GM12878 (cell line): ENCODE measurements at regions of chr21 and their contacts with region 1.

Region 1: DNA sequence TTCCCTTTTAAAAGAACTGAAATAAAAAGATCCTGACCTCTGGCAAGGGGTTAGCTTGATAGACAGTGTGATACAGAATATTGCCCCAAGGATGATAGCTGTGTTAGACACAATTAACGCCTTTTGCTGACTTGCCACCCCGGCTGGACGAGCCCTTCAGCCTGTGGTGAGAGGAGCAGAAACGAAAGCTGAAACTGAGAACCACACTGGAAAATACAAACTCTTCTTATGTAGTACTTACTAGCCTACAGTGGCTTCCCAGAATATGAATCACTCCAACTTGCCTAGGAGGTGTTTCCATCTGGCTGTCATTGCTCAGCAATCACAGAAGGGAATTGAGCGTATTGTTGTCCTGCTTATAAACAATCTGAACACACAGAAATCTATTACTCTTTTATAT is 22.9 kb downstream of the SAMSN1 start:
- DNase-seq: no peak
- ATAC-seq: peak; percentile 87
- H3K4me3 ChIP-seq: peak overlapping the region; percentile 29; the same call in 1 of the 2 replicates
- H3K27ac ChIP-seq: peak overlapping the region; percentile 50
- H3K4me1 ChIP-seq: peaks cover 32% of the 10 kb centered on the region
- H3K27me3 ChIP-seq: no peaks in the 10 kb centered on the region
- CTCF ChIP-seq: no peak
- EP300 ChIP-seq: no peak; a peak in 1 of 4 replicates
- POLR2A ChIP-seq: no peak
- RAD21 ChIP-seq: no peak

Region 2: GRCh38 chr21:14545906-14546480 is 22.8 kb after region 1 on chr21 and contains the start of gene SAMSN1:
- CTCF ChIA-PET with region 1: interaction called, 7 read pairs
- POLR2A ChIA-PET with region 1: interaction called, 5 read pairs
- RAD21 ChIA-PET with region 1: interaction called, 28 read pairs
- SMC1A ChIA-PET with region 1: interaction called, 120 read pairs
- in situ Hi-C with region 1: no loop called
- intact Hi-C with region 1: no loop called
- DNase-seq: peak; percentile 78
- ATAC-seq: peak; percentile 86
- H3K4me3 ChIP-seq: peak within 1 kb of the TSS; percentile 76
- H3K27ac ChIP-seq: peak within 1 kb of the TSS; percentile 87
- H3K4me1 ChIP-seq: peaks cover 12% of the 10 kb centered on the region; the same call in 1 of the 2 replicates
- H3K27me3 ChIP-seq: no peaks in the 10 kb centered on the region
- CTCF ChIP-seq: no peak
- EP300 ChIP-seq: peak in 1 of 2 experiments; percentile 66; a peak in 1 of 4 replicates
- POLR2A ChIP-seq: peak; percentile 83
- RAD21 ChIP-seq: 0 out of 2 replicates have a peak, but pooled peaks have one; percentile 22
- polyA plus RNA-seq, gene SAMSN1: 90.4 to 102 TPM

Region 3: GRCh38 chr21:14554948-14555347 is 31.7 kb after region 1 on chr21:
- CTCF ChIA-PET with region 1: no interaction called
- POLR2A ChIA-PET with region 1: no interaction called
- RAD21 ChIA-PET with region 1: interaction called, 4 read pairs
- SMC1A ChIA-PET with region 1: interaction called, 11 read pairs
- in situ Hi-C with region 1: no loop called
- intact Hi-C with region 1: no loop called
- DNase-seq: no peak
- ATAC-seq: peak; percentile 28; the same call in 1 of the 3 replicates
- H3K4me3 ChIP-seq: no peak overlapping the region
- H3K27ac ChIP-seq: no peak overlapping the region
- H3K4me1 ChIP-seq: peaks cover 19% of the 10 kb centered on the region
- H3K27me3 ChIP-seq: no peaks in the 10 kb centered on the region
- CTCF ChIP-seq: no peak
- EP300 ChIP-seq: no peak
- POLR2A ChIP-seq: no peak
- RAD21 ChIP-seq: no peak

Region 4: DNA sequence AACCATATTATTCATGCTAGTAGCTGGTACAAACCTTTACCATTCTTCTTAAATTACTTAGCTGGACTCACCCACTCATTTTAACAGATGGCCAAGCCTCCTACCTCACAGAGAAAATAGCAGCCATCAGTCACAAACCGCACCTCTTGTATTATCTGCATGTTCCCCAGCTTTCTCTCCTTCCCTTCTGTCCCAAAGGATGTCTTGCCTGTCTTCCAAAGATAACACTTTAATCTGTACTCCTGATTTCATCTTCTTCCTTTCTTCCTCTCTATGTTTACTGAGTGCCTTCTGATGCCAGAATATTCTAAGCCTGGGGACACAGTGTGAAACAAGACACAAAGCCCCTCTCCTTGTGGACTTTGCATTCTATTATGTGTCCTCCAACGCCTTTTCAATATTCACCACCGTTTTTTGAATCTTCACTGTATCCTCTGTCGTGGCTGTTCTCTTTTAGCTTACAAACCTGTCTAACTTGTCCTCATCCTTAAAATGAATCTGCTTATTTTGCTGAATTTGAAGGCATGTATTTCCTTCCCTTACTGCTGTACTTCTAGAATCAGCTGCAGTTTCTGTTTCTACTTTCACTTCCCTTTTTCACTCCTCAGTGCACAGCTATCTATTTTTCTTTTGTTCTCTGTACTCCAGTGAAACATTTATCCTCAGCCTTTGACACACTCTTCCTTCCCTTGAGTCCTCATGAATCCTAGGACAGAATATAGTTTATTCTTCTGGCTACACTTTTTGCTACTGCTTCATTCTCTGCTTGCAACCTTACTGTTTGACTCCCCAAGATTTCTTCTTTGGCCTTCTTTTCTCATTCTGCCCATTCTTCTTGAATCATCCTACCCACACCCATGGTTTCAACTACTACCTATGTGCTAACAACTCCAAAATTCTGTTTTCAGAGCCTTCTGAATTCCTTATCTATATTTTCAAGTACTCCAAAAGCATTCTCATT is 239.8 kb after region 1 on chr21:
- CTCF ChIA-PET with region 1: no interaction called
- POLR2A ChIA-PET with region 1: no interaction called
- RAD21 ChIA-PET with region 1: interaction called, 13 read pairs
- SMC1A ChIA-PET with region 1: interaction called, 5 read pairs
- in situ Hi-C with region 1: no loop called
- intact Hi-C with region 1: no loop called
- DNase-seq: peak; percentile 82
- ATAC-seq: peak; percentile 97
- H3K4me3 ChIP-seq: peak overlapping the region; percentile 59
- H3K27ac ChIP-seq: peak overlapping the region; percentile 87
- H3K4me1 ChIP-seq: peaks cover 10% of the 10 kb centered on the region
- H3K27me3 ChIP-seq: no peaks in the 10 kb centered on the region
- CTCF ChIP-seq: no peak
- EP300 ChIP-seq: peak; percentile 89 to 98
- POLR2A ChIP-seq: no peak
- RAD21 ChIP-seq: 0 out of 2 replicates have a peak, but pooled peaks have one; percentile 24

Region 5: GRCh38 chr21:14923468-14923867 is 400.2 kb after region 1 on chr21:
- CTCF ChIA-PET with region 1: no interaction called
- POLR2A ChIA-PET with region 1: no interaction called
- RAD21 ChIA-PET with region 1: no interaction called
- SMC1A ChIA-PET with region 1: no interaction called
- in situ Hi-C with region 1: no loop called
- intact Hi-C with region 1: no loop called
- DNase-seq: no peak
- ATAC-seq: no peak
- H3K4me3 ChIP-seq: no peak overlapping the region
- H3K27ac ChIP-seq: no peak overlapping the region
- H3K4me1 ChIP-seq: no peaks in the 10 kb centered on the region
- H3K27me3 ChIP-seq: no peaks in the 10 kb centered on the region
- CTCF ChIP-seq: no peak
- EP300 ChIP-seq: no peak
- POLR2A ChIP-seq: no peak
- RAD21 ChIP-seq: no peak

Region 6: GRCh38 chr21:15172992-15173626 is 649.9 kb after region 1 on chr21:
- CTCF ChIA-PET with region 1: no interaction called
- POLR2A ChIA-PET with region 1: no interaction called
- RAD21 ChIA-PET with region 1: no interaction called
- SMC1A ChIA-PET with region 1: no interaction called
- in situ Hi-C with region 1: no loop called
- intact Hi-C with region 1: no loop called
- DNase-seq: no peak
- ATAC-seq: no peak
- H3K4me3 ChIP-seq: no peak overlapping the region
- H3K27ac ChIP-seq: no peak overlapping the region
- H3K4me1 ChIP-seq: no peaks in the 10 kb centered on the region
- H3K27me3 ChIP-seq: no peaks in the 10 kb centered on the region; a peak in 1 of 4 replicates
- CTCF ChIP-seq: no peak
- EP300 ChIP-seq: no peak
- POLR2A ChIP-seq: no peak
- RAD21 ChIP-seq: no peak